ENCODE measurements at regions of chr1 and their contacts with region 1.

Region 1: DNA sequence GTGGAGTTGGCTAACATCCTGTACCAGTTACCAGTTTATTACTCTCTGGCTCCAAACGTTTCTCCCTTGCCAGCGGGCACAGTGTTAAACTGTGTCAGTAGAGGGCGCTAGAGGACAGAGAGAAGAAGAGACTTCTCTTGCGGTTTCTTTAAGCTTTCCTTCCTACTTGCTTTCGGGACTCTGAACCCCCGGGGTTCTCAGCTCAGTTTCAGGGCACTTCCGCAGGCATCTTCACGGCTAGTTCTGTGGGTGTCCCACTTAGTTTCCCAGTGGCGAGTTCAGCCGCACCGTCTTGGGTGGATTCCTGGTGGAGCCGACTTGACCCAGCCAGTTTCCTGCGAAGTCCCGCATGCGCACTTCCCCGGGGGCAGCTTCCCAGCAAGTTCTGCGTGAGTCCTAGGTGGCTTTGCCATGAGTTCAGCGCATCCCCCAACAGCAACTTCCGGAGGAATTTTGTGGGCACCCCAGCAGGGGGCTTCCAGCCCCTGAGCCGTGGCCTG is 37.9 kb upstream of the BTG2 start:
- DNase-seq: peak; percentile 87
- ATAC-seq: peak; percentile 49
- H3K4me3 Mint-ChIP-seq: peak overlapping the region; percentile 78
- H3K27ac Mint-ChIP-seq: peak overlapping the region; percentile 87
- H3K4me1 Mint-ChIP-seq: peaks cover 11% of the 10 kb centered on the region
- H3K27me3 Mint-ChIP-seq: no peaks in the 10 kb centered on the region
- CTCF ChIP-seq: peak; percentile 88

Region 2: DNA sequence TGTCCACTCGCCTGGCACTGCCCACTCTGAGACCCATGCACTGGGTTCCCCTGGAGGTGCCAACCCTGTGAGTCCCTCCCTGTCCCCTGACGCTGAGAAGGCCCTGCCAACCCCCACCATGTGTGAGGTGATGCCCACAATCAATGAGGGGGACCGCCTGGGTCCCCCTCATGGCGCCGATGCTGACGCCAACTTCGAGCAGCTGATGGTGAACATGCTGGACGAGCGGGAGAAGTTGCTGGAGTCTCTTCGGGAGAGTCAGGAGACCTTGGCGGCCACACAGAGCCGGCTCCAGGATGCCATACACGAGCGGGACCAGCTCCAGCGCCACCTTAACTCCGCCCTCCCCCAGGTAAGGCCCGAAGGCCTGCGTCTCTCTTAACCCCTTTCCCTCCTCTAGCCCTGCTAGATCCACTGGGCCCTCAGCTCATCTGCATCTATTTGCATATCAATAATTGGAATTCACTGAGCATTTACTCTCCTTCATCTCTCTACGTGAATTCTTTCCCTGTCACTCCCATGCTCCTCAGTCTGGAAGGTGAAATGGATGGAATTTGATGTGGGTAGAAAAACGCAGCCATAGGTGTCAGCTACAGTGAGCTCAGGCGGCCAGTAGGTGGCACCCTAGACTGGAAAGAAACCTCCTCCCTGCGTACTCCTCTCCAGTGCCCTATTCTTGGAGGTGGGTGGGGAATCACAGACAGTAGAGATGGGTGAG is 228.3 kb before region 1 on chr1:
- CTCF ChIA-PET with region 1: interaction called, 41 read pairs
- POLR2A ChIA-PET with region 1: no interaction called
- intact Hi-C with region 1: no loop called
- DNase-seq: peak; percentile 77
- ATAC-seq: peak; percentile 89
- H3K4me3 Mint-ChIP-seq: no peak overlapping the region
- H3K27ac Mint-ChIP-seq: no peak overlapping the region
- H3K4me1 Mint-ChIP-seq: peaks cover 6% of the 10 kb centered on the region
- H3K27me3 Mint-ChIP-seq: peaks cover 4% of the 10 kb centered on the region
- CTCF ChIP-seq: peak; percentile 77

Region 3: DNA sequence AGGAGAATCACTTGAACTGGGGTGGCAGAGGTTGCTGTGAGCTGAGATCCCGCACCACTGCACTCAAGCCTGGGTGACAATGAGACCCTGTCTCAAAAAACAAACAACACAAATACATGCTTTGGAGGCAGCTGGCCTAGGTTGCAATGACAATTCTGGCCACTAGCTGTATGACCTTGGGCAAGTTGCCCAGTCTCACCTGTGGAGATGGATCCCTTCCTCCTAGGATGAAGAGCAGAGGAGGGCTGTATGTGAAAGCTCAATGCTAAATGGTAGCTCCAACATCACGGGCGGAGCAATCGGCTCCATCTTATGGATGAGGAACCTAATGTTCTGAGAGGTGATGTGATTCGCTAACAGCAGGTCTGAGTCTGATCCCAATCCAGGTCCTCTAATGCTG is 119.3 kb before region 1 on chr1:
- CTCF ChIA-PET with region 1: no interaction called
- POLR2A ChIA-PET with region 1: no interaction called
- intact Hi-C with region 1: no loop called
- DNase-seq: no peak
- ATAC-seq: no peak
- H3K4me3 Mint-ChIP-seq: no peak overlapping the region
- H3K27ac Mint-ChIP-seq: no peak overlapping the region
- H3K4me1 Mint-ChIP-seq: no peaks in the 10 kb centered on the region
- H3K27me3 Mint-ChIP-seq: no peaks in the 10 kb centered on the region
- CTCF ChIP-seq: peak; percentile 55

Region 4: DNA sequence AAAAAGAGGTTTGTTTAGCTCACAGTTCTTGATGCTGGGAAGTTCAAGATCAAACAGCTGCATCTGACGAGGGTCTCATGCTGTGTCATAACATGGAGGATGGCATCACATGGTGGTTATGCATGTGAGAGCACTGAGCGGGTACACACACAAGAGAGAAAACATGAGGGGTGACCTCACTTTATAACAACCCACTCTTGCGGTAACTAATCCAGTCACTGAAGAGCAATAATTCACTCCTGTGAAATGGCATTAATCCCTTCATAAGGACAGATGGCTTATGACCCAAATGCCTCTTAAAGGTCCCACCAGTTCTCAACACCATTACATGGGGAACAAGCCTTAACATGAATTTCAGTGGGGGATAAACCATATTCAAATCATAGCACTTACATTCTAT is 14.7 kb before region 1 on chr1:
- CTCF ChIA-PET with region 1: interaction called, 38 read pairs
- POLR2A ChIA-PET with region 1: no interaction called
- intact Hi-C with region 1: no loop called
- DNase-seq: no peak
- ATAC-seq: no peak
- H3K4me3 Mint-ChIP-seq: no peak overlapping the region
- H3K27ac Mint-ChIP-seq: no peak overlapping the region
- H3K4me1 Mint-ChIP-seq: peaks cover 1% of the 10 kb centered on the region
- H3K27me3 Mint-ChIP-seq: peaks cover 18% of the 10 kb centered on the region
- CTCF ChIP-seq: no peak

Region 5: DNA sequence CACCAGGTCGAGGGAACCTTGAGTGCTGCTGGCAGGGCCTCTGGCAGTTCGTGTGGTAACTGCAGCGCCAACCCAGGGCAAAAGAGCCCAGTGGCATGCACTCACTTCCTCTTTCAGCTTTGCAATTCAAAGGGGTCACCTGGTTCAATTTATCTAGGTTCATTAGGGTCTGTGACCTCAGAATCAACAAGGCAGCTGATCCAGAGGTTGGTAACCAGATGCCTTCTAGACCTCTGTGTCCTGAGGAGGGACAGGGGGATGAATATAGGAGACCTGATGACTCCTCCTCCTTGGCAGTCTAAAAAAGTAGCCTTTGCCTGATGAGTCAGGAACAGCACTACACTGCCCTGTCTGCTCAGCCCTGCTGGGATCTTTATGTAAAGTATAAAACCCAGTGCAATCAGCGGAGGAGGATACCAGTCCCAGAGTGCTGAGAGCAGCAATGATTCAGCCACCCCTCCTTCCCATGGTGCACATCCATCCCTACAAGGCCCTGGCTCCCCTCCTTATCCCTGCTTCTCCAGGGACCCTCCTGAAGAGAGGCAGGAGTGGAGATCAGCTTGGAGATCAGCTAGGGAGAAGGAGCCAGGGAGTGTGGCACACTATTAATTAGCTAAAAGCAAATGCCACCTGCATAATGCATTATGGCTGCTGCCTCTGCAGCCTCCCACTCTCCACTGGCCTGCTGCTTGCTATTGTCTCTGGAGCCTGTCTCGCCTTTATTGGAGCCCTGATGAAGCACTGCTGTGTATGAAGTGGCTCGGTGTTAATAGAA is 94.7 kb after region 1 on chr1:
- CTCF ChIA-PET with region 1: interaction called, 17 read pairs
- POLR2A ChIA-PET with region 1: no interaction called
- intact Hi-C with region 1: no loop called
- DNase-seq: no peak
- ATAC-seq: no peak
- H3K4me3 Mint-ChIP-seq: no peak overlapping the region
- H3K27ac Mint-ChIP-seq: no peak overlapping the region
- H3K4me1 Mint-ChIP-seq: no peaks in the 10 kb centered on the region
- H3K27me3 Mint-ChIP-seq: peaks cover 32% of the 10 kb centered on the region
- CTCF ChIP-seq: no peak

Region 6: DNA sequence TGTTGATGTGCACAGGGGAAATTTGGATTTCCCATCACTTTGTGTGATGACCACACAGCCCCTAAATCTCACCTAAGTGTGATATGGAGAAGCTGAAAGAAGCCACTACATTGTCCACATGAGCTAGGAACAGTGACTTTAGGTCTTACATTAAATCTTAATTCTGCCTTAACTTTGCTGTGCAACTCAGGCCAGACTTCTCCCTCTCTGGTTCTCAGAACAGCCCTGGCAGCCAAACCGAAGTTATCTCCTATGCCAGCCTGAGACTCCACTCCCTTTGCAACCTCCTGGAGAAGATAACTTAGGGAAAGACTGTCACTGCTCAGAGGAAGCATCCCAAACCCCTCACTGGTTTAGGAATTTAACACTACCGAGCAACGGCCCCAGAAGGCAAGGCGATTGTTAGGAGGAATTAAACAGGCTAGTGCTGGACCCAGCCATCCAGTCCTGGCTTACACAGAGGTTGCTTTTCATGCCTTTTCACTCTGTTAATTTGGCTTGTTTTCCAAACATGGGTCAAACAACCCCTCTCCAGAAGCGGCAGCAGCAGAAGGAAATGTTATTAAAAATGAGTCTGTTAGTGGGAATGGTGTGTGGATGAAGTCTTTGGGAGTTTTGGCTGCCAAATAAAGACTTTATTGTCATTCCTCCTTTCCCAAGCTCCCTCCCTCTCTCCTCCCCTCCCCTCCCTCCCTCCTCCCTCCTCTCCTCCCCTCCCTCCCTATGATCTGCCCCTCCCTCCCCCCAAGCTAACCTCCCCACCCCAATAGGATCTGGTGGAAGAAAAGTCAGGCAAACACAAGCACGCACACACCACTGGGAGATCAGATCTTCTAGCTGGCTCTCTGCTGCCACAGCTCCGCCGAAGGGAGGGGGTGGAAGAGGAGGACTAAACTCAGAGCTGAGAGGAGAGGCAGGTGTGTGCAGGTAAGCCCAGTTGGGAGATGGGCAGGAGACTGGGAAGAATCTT is 207.9 kb after region 1 on chr1 and contains the start of gene PRELP:
- CTCF ChIA-PET with region 1: interaction called, 11 read pairs
- POLR2A ChIA-PET with region 1: no interaction called
- intact Hi-C with region 1: no loop called
- DNase-seq: no peak
- ATAC-seq: no peak
- H3K4me3 Mint-ChIP-seq: no peak within 1 kb of the TSS
- H3K27ac Mint-ChIP-seq: no peak within 1 kb of the TSS
- H3K4me1 Mint-ChIP-seq: peaks cover 7% of the 10 kb centered on the region
- H3K27me3 Mint-ChIP-seq: peaks cover 8% of the 10 kb centered on the region
- CTCF ChIP-seq: no peak
- total RNA-seq, gene PRELP: not detected

Region 7: GRCh38 chr1:203504397-203505250 is 237.2 kb after region 1 on chr1:
- CTCF ChIA-PET with region 1: interaction called, 29 read pairs
- POLR2A ChIA-PET with region 1: no interaction called
- intact Hi-C with region 1: no loop called
- DNase-seq: peak; percentile 89
- ATAC-seq: peak; percentile 81
- H3K4me3 Mint-ChIP-seq: no peak overlapping the region
- H3K27ac Mint-ChIP-seq: no peak overlapping the region
- H3K4me1 Mint-ChIP-seq: no peaks in the 10 kb centered on the region
- H3K27me3 Mint-ChIP-seq: no peaks in the 10 kb centered on the region
- CTCF ChIP-seq: peak; percentile 98